Activated CD8-positive, alpha-beta T cell treated with anti-CD3 and anti-CD28 coated beads for 36 hours (primary cell): ENCODE measurements at regions of chr17 and their contacts with region 1.

Region 1: GRCh38 chr17:64129764-64130558 is at the start of gene ERN1:
- DNase-seq: peak; percentile 92
- ATAC-seq: peak; percentile 89
- H3K4me3 Mint-ChIP-seq: peak within 1 kb of the TSS; percentile 93
- H3K27ac Mint-ChIP-seq: peak within 1 kb of the TSS; percentile 97
- H3K4me1 Mint-ChIP-seq: peaks cover 40% of the 10 kb centered on the region
- H3K27me3 Mint-ChIP-seq: no peaks in the 10 kb centered on the region
- CTCF ChIP-seq: no peak
- total RNA-seq, gene ERN1: 19.2 to 23.6 TPM

Region 2: GRCh38 chr17:63919311-63919723 is 210.6 kb before region 1 on chr17:
- CTCF ChIA-PET with region 1: interaction called, 19 read pairs
- POLR2A ChIA-PET with region 1: interaction called, 4 read pairs
- intact Hi-C with region 1: loop called (anchors 5 kb)
- DNase-seq: peak; percentile 80
- ATAC-seq: peak; percentile 99
- H3K4me3 Mint-ChIP-seq: no peak overlapping the region
- H3K27ac Mint-ChIP-seq: no peak overlapping the region
- H3K4me1 Mint-ChIP-seq: peaks cover 5% of the 10 kb centered on the region
- H3K27me3 Mint-ChIP-seq: no peaks in the 10 kb centered on the region
- CTCF ChIP-seq: peak; percentile 95

Region 3: DNA sequence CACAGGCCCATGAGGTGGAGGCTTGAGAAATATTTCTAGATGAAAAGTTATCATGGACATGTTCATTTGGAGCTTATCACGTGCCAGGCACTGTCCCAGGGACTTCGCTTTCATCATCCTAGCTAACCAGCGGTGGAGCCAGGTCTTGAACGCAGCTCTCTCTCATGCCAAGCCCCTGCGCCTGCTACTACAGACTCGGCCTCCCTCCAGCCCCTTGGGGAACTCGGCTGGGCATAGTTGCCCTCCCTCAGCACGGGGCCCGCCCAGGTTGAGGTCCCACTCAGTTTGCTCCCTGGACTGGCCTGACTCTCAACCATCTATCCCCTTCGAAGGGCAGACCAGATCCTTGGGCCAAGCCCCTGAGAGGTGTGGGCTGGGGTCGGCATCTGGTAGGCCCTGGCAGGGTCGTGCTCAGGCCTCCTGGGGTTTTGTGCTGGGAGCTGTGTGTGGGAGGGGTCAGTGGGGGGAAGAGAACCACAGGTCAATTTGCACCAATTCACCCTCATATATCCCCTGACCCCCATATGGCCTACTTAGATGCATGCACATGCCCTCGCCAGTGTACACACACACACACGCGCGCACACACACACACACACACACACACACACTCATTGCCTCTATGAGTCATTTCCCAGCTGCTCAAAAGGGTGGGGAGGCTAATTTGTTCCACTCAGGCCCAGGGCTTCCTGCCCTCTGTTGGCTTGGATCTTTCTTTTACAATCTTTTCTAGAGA is 145.1 kb before region 1 on chr17:
- CTCF ChIA-PET with region 1: interaction called, 13 read pairs
- POLR2A ChIA-PET with region 1: no interaction called
- intact Hi-C with region 1: no loop called
- DNase-seq: peak; percentile 92
- ATAC-seq: peak; percentile 97
- H3K4me3 Mint-ChIP-seq: no peak overlapping the region
- H3K27ac Mint-ChIP-seq: peak overlapping the region; percentile 87
- H3K4me1 Mint-ChIP-seq: peaks cover 27% of the 10 kb centered on the region
- H3K27me3 Mint-ChIP-seq: no peaks in the 10 kb centered on the region
- CTCF ChIP-seq: no peak

Region 4: DNA sequence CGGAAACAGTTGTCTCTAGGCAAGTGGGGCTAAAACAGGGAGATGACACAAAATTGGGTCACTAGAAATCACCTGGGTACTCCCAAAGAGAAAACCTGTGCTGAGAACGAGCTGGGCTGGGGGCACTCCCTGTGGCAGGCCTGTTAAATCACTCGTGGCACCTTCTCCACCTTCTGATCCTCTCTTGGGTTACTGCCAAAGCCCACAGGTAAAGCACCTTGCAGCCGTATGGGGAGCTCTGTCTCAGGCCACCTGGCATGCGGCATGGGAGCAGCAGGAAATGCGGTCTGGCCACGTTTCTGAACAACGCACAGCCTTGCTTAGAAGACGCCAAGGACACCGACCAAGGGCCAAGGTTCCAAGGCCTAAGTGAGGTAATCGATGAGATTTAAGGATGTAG is 88.0 kb before region 1 on chr17:
- CTCF ChIA-PET with region 1: interaction called, 15 read pairs
- POLR2A ChIA-PET with region 1: no interaction called
- intact Hi-C with region 1: no loop called
- DNase-seq: no peak
- ATAC-seq: no peak
- H3K4me3 Mint-ChIP-seq: no peak overlapping the region
- H3K27ac Mint-ChIP-seq: peak overlapping the region; percentile 48
- H3K4me1 Mint-ChIP-seq: peaks cover 2% of the 10 kb centered on the region
- H3K27me3 Mint-ChIP-seq: no peaks in the 10 kb centered on the region
- CTCF ChIP-seq: no peak

Region 5: DNA sequence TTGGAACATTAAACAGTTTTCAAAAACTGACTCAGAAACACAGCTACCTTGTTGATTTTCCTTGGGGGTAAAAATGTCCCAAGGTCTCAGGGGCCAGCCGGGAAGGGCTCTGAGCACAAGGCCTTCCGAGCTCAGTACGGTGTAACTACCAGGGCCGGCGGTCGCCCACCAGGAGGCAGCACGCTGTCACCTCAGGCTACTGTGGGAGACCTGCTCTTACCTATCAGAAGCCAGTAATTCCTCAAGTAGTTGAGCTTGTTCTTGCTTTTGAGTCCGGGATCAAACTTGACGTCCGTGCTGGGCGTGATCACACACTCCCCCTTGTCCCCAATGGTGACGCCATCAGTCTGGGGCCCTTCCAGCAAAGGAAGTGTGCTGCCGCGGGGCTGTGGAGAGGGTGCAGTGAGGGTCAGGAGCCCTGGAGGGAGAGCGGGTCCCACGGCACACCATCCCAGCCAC is 66.2 kb before region 1 on chr17:
- CTCF ChIA-PET with region 1: interaction called, 228 read pairs
- POLR2A ChIA-PET with region 1: interaction called, 12 read pairs
- intact Hi-C with region 1: loop called (anchors 5 kb)
- DNase-seq: peak; percentile 78
- ATAC-seq: peak; percentile 45
- H3K4me3 Mint-ChIP-seq: peak overlapping the region; percentile 54
- H3K27ac Mint-ChIP-seq: peak overlapping the region; percentile 78
- H3K4me1 Mint-ChIP-seq: peaks cover 73% of the 10 kb centered on the region
- H3K27me3 Mint-ChIP-seq: no peaks in the 10 kb centered on the region
- CTCF ChIP-seq: peak; percentile 71

Region 6: DNA sequence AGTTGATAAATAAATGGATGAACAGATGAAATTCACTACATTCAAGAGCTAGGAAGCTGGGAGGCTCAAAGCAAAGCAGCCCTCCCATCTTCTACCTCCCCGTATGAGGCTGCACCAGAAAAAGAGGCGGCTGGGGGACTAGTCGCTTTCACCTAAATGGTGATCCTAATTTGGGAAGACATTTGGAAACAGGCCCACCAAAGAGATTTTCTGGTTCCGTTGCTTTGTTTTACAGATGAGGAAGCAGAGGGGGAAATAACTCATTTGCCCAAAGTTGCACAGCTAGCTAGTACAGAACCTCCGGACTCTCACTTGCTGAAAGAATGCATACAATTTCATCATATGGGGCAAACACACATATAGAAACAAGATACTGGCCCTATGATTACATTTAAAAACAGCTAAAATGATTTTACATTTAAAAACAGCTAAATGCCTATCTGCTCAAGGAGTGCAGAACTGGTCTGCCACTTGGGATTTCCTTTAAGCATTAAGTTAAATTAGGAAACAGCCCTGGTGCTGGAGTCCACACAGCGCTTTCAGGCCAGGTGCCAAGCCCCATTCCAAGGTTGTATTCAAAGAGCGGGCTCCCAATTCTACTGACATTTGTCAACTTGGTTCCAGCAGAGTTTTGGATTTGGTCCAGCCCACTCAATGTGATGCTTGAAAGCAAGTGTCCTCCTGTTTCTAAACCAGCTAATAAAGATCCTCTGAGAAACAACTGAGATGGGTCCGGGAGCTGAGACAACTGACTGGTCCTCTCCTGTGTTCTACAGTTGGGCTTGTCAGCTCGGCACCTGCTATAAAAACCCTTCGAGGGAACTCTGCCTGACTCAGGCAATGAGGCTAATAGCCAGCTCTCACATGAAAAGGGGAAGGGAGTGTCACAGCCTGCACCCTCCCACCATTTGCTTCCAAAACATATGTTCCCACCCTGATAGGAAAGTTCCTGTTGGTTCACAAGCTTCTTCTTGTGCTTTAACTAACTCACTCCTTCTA is 11.7 kb before region 1 on chr17:
- CTCF ChIA-PET with region 1: interaction called, 27 read pairs
- POLR2A ChIA-PET with region 1: interaction called, 17 read pairs
- intact Hi-C with region 1: no loop called
- DNase-seq: no peak
- ATAC-seq: no peak
- H3K4me3 Mint-ChIP-seq: no peak overlapping the region
- H3K27ac Mint-ChIP-seq: peak overlapping the region; percentile 82
- H3K4me1 Mint-ChIP-seq: peaks cover 75% of the 10 kb centered on the region
- H3K27me3 Mint-ChIP-seq: no peaks in the 10 kb centered on the region
- CTCF ChIP-seq: no peak

Region 7: DNA sequence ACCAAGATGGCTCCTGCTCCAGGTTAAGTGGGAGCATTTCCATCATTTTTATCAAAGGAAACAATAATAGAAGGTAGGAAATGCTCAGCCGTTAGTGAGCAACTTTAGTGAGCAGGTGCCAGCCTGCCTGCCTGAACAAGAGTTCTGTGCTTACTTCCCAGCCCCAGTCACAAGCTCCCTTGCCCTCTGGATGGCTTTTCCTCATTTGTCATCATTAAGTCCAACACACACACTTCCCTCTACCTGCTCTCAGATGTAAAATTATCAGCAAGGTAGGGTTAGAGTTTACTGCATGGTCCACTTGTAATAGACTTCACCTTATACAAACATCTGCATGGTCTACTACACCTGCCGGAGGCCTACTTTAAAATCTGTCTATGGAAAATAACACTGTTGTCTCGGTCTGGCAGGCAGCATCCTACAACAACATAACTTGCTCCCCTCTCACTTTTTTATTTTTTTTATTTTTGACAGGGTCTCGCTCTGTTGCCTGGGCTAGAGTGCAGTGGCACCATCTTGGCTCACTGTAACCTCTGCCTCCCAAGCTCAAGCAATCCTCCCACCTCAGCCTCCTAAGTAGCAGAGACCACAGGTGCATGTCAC is 120.4 kb after region 1 on chr17:
- CTCF ChIA-PET with region 1: no interaction called
- POLR2A ChIA-PET with region 1: no interaction called
- intact Hi-C with region 1: no loop called
- DNase-seq: no peak
- ATAC-seq: no peak
- H3K4me3 Mint-ChIP-seq: no peak overlapping the region
- H3K27ac Mint-ChIP-seq: no peak overlapping the region
- H3K4me1 Mint-ChIP-seq: peaks cover 4% of the 10 kb centered on the region
- H3K27me3 Mint-ChIP-seq: no peaks in the 10 kb centered on the region
- CTCF ChIP-seq: no peak

Region 8: DNA sequence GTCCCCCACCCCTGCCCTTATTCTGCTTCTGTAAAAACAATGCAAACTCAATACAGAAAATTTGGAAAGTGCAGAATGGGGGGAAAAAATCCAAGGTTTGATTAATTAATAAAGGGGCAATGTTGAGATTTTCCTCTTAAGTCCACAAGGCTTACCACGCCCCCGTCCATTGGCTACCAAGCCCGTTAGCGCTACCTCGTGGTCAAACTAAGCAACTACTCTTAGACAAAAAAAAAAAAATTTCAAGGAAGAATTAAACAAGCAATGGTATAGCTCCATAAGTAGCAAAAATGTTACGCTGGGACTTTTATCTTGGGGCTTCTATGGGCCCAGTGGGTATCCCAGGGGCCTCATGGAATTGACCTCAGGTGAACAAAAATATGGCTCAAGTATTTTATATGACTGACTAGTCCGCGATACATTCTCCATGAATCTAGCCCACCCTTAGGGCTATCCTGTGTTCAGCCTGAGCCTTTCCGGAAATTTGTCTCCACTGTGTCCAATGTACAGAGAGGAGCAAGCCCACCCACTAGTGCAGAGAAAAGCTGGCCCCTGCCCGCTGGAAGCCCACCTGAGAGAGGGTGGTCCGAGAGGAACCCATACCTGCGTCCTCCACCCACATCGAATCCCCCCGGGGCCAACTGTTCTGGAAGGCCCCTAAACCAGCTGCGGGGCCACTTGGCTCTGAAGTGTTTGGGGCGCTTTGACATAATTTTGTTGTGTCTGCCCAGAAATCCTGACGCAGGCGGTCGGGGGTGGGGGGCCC is 152.2 kb after region 1 on chr17:
- CTCF ChIA-PET with region 1: interaction called, 11 read pairs
- POLR2A ChIA-PET with region 1: no interaction called
- intact Hi-C with region 1: no loop called
- DNase-seq: peak; percentile 74
- ATAC-seq: peak; percentile 77
- H3K4me3 Mint-ChIP-seq: no peak overlapping the region
- H3K27ac Mint-ChIP-seq: no peak overlapping the region
- H3K4me1 Mint-ChIP-seq: peaks cover 2% of the 10 kb centered on the region
- H3K27me3 Mint-ChIP-seq: no peaks in the 10 kb centered on the region
- CTCF ChIP-seq: peak; percentile 84